Posterior vena cava (tissue), 2 donors: ENCODE measurements at regions of chr2 and their contacts with region 1.

Region 1: GRCh38 chr2:1685957-1686784 is 58.1 kb downstream of the PXDN start:
- DNase-seq: no peak

Region 2: DNA sequence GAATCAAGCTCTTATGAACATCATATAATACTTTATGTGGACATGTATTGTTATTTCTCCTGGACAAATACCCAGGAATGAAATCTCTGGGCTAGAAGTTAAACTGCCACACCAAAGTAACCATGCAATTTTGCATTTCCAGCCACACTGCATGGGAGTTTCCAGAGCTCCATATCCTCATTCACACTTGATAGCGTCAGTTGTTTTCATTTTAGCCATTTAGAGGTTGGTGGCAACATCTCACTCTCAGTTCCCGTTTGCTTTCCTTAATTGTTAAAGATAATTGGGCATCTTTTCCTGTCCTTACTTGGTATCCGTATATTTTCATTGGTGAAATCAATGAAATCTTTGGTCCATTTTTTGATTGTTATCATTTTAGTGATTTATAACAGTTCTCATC is 1470.1 kb before region 1 on chr2:
- intact Hi-C with region 1: loop called in 1 of 2 experiments (anchors 5 kb)
- DNase-seq: no peak

Region 3: GRCh38 chr2:1715184-1716013 is 29.2 kb after region 1 on chr2:
- intact Hi-C with region 1: loop called in 1 of 2 experiments (anchors 1 kb)
- DNase-seq: peak; percentile 80